ENCODE measurements at regions of chr12 and their contacts with region 1.

Region 1: DNA sequence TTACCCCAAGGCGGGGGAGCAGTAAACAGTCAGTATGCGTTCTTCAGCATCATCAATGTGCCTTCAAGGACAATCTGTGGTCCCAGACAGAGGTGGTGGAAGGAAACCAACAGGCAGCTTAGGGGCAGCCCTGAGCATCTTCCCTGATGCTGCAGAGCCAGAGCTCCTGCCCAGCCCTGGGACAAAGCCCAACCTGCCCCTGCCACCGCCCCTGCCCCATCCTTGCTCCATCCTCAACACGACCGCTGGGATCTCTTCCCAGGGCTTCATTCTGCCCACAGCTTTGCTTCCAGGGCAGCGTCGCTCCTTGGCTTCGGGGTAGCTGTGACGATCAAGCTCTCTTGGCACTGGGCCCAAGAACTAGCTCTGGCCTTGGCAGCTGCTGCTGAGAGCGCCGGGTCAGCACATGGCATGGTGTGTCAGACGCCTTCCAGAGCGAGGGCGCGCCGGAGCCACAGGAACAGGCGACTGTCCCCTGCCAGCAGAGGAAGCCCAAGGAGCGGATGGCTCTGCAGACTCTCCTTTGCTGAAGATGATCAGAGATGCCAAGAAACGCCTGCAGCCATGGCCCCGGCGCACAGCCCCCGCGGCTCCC is 16.0 kb downstream of the RAB35 start:
- DNase-seq: no peak
- H3K4me3 ChIP-seq: no peak overlapping the region
- H3K27ac ChIP-seq: no peak overlapping the region
- H3K4me1 ChIP-seq: peaks cover 0 to 25% (median 10%) of the 10 kb centered on the region in 4 experiments
- H3K27me3 ChIP-seq: no peaks in the 10 kb centered on the region

Region 2: DNA sequence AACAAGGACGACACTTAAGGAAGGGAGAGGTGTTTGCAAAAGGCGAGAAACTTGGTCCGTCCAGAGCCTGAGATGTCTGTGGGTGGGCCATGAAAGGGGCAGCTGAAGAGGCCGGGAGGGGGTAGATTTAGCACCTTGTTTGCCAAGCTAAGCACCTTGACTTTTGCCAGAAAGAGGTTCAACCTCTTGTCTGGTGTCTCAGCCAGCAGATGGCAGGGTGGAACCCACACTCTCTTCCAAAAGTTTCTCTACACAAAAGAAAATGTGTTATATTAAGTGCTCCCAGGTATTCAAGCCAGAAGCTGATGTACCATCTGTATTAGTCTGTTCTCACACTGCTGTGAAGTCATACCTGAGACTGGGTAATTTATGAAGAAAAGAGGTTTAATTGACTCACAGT is 1654.3 kb before region 1 on chr12:
- CTCF ChIA-PET with region 1: no interaction called
- POLR2A ChIA-PET with region 1: no interaction called
- DNase-seq: no peak
- H3K4me3 ChIP-seq: no peak overlapping the region
- H3K27ac ChIP-seq: no peak overlapping the region
- H3K4me1 ChIP-seq: no peaks in the 10 kb centered on the region
- H3K27me3 ChIP-seq: peaks cover 0 to 8% (median 0%) of the 10 kb centered on the region in 5 experiments

Region 3: GRCh38 chr12:120086801-120087621 is 13.5 kb before region 1 on chr12:
- CTCF ChIA-PET with region 1: interaction called, 20 read pairs
- POLR2A ChIA-PET with region 1: interaction called, 5 read pairs
- DNase-seq: peak; percentile 99 to 100 (median 100)
- H3K4me3 ChIP-seq: peak overlapping the region; percentile 19 to 76 (median 63)
- H3K27ac ChIP-seq: no peak overlapping the region
- H3K4me1 ChIP-seq: peaks cover 4 to 16% (median 10%) of the 10 kb centered on the region in 4 experiments
- H3K27me3 ChIP-seq: peaks cover 0 to 4% (median 0%) of the 10 kb centered on the region in 5 experiments

Region 4: DNA sequence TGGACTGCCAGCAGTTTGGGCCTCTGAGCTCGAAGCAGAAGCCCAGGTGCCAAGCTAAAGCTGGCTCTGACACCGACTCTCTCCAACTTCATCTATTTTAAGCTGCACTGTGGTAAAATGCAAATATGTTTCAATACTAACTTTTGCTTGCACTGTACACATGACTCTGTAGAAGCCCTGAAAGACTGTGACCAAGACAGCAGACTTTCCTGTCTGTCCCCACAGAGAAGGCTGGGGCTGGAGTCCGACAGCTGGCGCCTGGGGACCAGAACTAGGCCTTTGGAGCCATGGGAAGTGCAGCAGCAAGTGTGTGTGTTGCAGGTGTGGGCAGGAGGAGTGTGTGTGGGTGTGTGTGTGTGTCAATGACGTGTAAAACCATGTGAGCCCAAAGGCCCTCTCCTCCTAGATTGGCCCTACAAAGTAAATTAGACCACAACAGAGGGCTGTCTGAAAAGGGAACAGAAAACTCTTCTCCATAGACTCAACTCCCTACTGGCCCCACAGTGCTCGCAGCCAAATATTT is 32.4 kb after region 1 on chr12:
- CTCF ChIA-PET with region 1: no interaction called
- POLR2A ChIA-PET with region 1: no interaction called
- DNase-seq: no peak
- H3K4me3 ChIP-seq: no peak overlapping the region
- H3K27ac ChIP-seq: no peak overlapping the region
- H3K4me1 ChIP-seq: no peaks in the 10 kb centered on the region
- H3K27me3 ChIP-seq: no peaks in the 10 kb centered on the region